Activated CD8-positive, alpha-beta T cell treated with anti-CD3 and anti-CD28 coated beads for 36 hours (primary cell): ENCODE measurements at regions of chr2 and their contacts with region 1.

Region 1: DNA sequence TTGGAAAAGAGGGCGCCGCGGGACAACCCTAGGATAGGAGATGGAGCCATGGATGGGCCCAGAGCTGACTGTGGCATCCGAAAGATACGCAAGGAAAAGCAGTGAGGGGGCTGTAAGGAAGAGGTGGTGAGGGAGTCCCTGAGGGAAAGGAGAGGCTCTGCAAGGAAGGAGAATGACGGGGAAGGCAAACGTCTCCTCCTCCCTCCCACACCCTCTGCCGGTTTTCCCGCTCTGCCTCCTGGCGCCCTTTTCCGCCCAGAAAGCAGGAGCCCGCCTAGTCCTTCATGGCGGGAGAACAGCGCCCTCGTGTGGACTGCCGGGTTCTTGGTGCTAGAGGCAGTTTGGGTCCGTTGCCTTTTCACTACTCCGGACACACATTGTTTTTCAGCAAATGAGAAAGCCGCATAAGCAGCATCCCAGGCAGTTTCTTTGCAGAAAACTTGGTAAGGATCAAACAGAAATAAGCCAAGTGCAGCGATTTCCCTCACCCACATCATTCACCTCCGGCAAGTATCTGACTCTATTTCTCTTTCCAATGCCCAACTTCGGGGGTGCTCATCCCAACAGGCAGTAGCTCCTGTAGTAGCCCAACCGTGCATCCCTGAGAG is 200.4 kb downstream of the INO80D start:
- DNase-seq: peak; percentile 81
- ATAC-seq: peak; percentile 53
- H3K4me3 Mint-ChIP-seq: no peak overlapping the region
- H3K27ac Mint-ChIP-seq: no peak overlapping the region
- H3K4me1 Mint-ChIP-seq: no peaks in the 10 kb centered on the region
- H3K27me3 Mint-ChIP-seq: peaks cover 10% of the 10 kb centered on the region
- CTCF ChIP-seq: peak; percentile 70

Region 2: DNA sequence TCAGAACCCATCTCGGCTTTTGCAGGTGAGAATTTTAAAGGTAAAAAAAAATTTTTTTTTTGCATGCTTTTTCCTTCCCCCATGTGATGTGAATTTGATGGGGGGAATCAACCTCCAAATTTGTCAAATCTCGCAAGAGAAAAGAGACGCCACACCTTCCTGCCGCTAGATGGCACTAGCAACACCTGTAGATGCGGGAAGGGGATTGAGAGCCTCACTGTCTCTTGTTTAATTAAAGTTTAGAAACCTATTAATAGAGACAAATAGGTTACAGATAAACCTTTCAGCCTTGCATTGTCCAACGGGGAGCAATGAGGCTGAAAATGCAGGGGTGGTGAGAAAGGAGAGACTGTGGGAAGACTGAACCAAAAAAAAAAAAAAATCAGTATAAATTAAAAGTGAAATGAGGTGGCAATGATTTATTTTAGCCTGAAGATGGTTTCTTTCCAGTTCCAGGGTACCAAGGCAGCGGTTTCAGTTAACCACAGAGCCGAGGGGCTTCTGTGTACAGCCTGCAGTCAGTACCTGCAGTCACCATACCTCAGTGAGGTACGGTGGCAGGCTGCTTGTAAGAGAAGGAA is 118.7 kb before region 1 on chr2:
- CTCF ChIA-PET with region 1: interaction called, 4 read pairs
- POLR2A ChIA-PET with region 1: no interaction called
- intact Hi-C with region 1: loop called (anchors 5 kb)
- DNase-seq: peak; percentile 78
- ATAC-seq: no peak
- H3K4me3 Mint-ChIP-seq: no peak overlapping the region
- H3K27ac Mint-ChIP-seq: no peak overlapping the region
- H3K4me1 Mint-ChIP-seq: peaks cover 4% of the 10 kb centered on the region
- H3K27me3 Mint-ChIP-seq: peaks cover 15% of the 10 kb centered on the region
- CTCF ChIP-seq: peak; percentile 90

Region 3: DNA sequence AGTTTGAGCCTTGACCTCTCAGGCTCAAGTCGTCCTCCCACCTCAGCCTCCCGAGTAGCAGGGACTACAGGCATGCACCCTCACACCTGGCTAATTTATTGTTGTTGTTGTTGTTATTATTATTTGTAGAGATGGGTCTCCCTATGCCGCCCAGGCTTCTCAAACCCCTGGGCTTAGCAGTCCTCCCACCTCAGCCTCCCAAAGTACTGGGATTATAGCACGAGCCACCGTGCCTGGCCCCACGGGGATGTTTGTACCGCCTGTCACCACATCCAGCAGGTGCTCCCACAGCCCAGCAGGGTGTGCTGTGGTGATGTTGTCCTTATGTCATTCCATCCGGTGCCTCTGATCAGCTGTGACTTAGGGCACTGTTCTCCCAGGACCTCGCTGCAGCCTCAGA is 18.0 kb after region 1 on chr2:
- CTCF ChIA-PET with region 1: no interaction called
- POLR2A ChIA-PET with region 1: no interaction called
- intact Hi-C with region 1: no loop called
- DNase-seq: peak; percentile 21
- ATAC-seq: no peak
- H3K4me3 Mint-ChIP-seq: no peak overlapping the region
- H3K27ac Mint-ChIP-seq: no peak overlapping the region
- H3K4me1 Mint-ChIP-seq: no peaks in the 10 kb centered on the region
- H3K27me3 Mint-ChIP-seq: peaks cover 9% of the 10 kb centered on the region
- CTCF ChIP-seq: no peak